HepG2 (cell line): ENCODE measurements at regions of chr3 and their contacts with region 1.

Region 1: DNA sequence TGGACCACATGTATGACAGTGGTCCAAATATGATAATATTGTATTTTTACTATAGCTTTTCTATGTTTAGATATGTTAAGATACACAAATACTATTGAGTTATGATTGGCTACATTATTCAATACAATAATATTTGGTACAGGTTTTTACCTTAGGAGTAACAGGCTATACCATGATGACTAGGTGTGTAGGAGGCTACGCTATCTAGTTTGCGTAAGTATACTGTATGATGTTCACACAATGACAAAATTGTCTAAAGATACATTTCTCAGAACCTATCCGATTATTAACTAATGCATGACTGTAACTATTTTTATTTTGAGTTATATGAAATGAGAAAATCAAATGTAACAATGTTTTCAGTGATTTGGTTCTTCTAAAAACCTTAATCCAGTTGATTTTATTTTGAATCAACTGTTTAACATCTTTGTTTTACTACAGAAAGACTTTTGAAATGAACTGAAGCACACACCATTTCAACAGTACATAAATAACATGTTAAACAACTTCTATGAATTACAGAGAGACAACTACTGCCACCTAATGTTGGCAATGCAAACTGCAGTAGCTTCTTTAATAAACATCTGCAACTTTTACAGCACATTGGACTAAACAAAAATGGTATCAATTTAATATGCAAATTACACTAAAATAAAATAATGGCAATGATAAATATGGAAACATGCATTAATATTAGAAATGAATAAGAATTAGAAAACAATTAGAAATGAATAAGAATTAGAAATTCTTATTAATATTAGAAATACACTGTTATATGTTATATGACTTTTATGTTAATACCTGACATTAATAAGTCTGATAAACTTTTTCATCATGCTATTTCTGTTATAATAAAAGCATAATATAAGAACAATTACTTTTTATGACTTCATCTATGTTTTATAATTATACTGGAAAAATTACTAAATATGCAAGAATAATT is 255.7 kb downstream of the MBNL1 start:
- DNase-seq: peak; percentile 33
- ATAC-seq: peak; percentile 23; the same call in 1 of the 3 replicates
- H3K4me3 ChIP-seq: no peak overlapping the region
- H3K27ac ChIP-seq: no peak overlapping the region
- H3K4me1 ChIP-seq: no peaks in the 10 kb centered on the region
- H3K27me3 ChIP-seq: no peaks in the 10 kb centered on the region
- CTCF ChIP-seq: peak; percentile 68
- EP300 ChIP-seq: no peak
- POLR2A ChIP-seq: no peak
- RAD21 ChIP-seq: 0 out of 2 replicates have a peak, but pooled peaks have one; percentile 14

Region 2: DNA sequence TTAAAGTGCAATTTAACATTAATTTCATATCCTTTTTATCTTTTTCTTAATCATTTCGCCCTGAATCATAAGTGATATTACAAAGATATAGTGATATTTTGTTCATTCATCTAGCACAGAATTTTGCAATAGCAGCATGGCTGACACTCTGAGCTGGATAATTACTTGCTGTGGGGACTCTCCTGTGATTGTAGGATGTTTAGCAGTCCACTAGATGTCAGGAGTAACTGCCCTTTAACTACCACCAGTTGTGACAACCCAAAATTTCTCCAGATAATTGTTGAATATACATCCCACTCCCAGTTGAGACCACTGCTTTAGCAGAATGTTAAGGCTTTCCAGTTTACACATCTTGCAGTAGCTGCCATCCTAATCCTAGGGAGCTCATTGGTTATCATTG is 452.5 kb before region 1 on chr3:
- CTCF ChIA-PET with region 1: no interaction called
- POLR2A ChIA-PET with region 1: no interaction called
- in situ Hi-C with region 1: no loop called
- intact Hi-C with region 1: loop called (anchors 1 kb)
- DNase-seq: peak; percentile 19
- ATAC-seq: peak; percentile 77
- H3K4me3 ChIP-seq: no peak overlapping the region
- H3K27ac ChIP-seq: no peak overlapping the region
- H3K4me1 ChIP-seq: no peaks in the 10 kb centered on the region
- H3K27me3 ChIP-seq: no peaks in the 10 kb centered on the region
- CTCF ChIP-seq: peak; percentile 54
- EP300 ChIP-seq: no peak
- POLR2A ChIP-seq: no peak
- RAD21 ChIP-seq: no peak